ENCODE measurements at regions of chr18 and their contacts with region 1.

Region 1: DNA sequence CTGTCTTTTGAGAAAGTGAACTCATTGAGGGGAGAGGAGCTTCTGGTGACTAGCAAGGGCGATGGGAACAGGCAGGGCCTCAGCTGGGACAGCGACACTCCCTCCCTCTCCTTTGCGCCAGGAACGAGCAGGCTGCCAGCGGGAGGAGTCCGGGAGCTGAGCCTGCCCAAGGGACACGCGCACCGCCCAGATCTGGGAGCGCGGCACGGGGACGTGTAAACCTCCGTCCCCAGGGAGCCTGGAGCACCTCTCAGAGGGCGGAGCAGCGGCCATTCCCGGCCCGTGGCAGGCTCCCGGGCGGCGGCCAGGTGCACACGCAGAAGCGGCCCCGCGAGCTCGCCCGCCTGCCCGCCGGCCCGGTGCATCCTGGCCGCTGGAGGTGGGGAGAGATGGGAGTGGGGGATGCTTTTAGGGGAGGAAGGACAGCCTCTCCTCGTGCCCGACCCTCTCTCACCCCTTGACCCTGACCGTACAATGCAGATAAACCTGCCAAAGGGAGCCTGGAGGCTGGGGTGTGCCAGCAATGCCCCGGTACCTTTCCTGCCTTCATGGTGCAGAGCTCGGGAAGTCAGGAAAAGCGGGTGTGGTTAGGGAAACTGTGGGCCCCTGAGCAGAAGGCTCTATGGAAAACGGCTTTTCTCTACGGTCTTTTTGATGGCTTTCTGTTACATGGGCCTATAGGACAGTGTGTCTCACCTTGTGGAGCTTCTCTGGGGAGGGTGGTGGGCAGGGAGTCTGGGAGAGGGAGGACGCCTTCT is 2.2 kb downstream of the AQP4 start:
- DNase-seq: peak; percentile 74 to 95
- ATAC-seq: peak; percentile 86 to 94 (median 92)
- H3K4me3 ChIP-seq: peak overlapping the region; percentile 66
- H3K27ac ChIP-seq: peak overlapping the region; percentile 83
- H3K4me1 ChIP-seq: peaks cover 28% of the 10 kb centered on the region
- H3K27me3 ChIP-seq: no peaks in the 10 kb centered on the region
- CTCF ChIP-seq: no peak

Region 2: GRCh38 chr18:26926066-26926675 is 62.9 kb after region 1 on chr18:
- intact Hi-C with region 1: no loop called
- DNase-seq: no peak
- ATAC-seq: no peak
- H3K4me3 ChIP-seq: no peak overlapping the region
- H3K27ac ChIP-seq: no peak overlapping the region
- H3K4me1 ChIP-seq: no peaks in the 10 kb centered on the region
- H3K27me3 ChIP-seq: no peaks in the 10 kb centered on the region
- CTCF ChIP-seq: no peak

Region 3: GRCh38 chr18:26963292-26963691 is 100.0 kb after region 1 on chr18:
- intact Hi-C with region 1: loop called in 1 of 2 experiments (anchors 10 kb)
- DNase-seq: no peak
- ATAC-seq: peak in 3 of 4 donors; percentile 50 to 75 (median 57)
- H3K4me3 ChIP-seq: no peak overlapping the region
- H3K27ac ChIP-seq: no peak overlapping the region
- H3K4me1 ChIP-seq: peaks cover 12% of the 10 kb centered on the region
- H3K27me3 ChIP-seq: no peaks in the 10 kb centered on the region
- CTCF ChIP-seq: peak; percentile 24

Region 4: DNA sequence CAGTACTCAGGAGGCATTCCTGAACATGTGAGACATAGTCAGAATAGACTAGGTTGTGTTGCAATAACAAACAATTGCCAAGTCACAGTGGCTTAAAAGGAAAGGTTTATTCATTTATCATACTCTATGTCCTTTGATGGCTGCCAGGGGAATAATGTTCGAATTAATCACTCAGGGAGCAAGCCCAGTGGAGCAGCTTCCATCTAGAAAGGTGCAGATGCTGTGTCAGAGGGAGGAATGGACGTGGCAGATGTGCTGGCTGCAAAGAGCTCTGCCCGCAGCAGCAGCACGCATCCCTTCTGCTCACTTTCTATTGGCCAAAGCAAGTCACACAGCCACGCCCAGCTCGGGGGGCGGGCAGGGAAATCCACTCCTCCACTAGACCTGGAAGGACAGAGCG is 108.1 kb after region 1 on chr18:
- intact Hi-C with region 1: loop called (anchors 5 to 10 kb)
- DNase-seq: peak in 1 of 2 donors; percentile 76
- ATAC-seq: peak; percentile 74 to 90 (median 85)
- H3K4me3 ChIP-seq: no peak overlapping the region
- H3K27ac ChIP-seq: peak overlapping the region; percentile 67
- H3K4me1 ChIP-seq: peaks cover 6% of the 10 kb centered on the region
- H3K27me3 ChIP-seq: no peaks in the 10 kb centered on the region
- CTCF ChIP-seq: no peak

Region 5: DNA sequence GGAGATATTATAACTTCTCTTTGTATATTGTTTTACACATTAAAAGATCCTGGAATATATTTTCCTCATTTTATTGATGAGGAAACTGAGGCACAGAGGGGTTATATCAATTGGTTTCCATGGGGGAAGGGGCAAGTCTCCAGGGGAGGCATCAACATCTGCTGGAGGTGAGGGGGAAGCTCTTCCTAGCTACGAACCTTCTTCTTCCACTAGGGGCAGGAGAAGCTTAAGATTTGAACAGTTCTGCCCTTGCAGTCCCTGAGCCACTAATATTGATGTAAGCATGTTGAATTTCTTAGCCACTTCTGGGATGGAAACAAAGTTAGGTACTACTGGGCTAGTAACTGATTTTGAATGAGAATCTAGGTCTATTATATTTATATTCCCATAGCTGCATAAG is 142.3 kb after region 1 on chr18:
- intact Hi-C with region 1: loop called in 1 of 2 experiments (anchors 10 kb)
- DNase-seq: no peak
- ATAC-seq: no peak
- H3K4me3 ChIP-seq: no peak overlapping the region
- H3K27ac ChIP-seq: no peak overlapping the region
- H3K4me1 ChIP-seq: no peaks in the 10 kb centered on the region
- H3K27me3 ChIP-seq: no peaks in the 10 kb centered on the region
- CTCF ChIP-seq: peak; percentile 23

Measured in psoas muscle (tissue), 8 donors.